ENCODE measurements at regions of chr17 and their contacts with region 1.

Region 1: GRCh38 chr17:29116804-29117772 is 63.1 kb downstream of the MYO18A start:
- DNase-seq: peak; percentile 77
- ATAC-seq: peak; percentile 70
- H3K4me3 ChIP-seq: no peak overlapping the region
- H3K4me3 Mint-ChIP-seq: no peak overlapping the region
- H3K27ac ChIP-seq: no peak overlapping the region
- H3K27ac Mint-ChIP-seq: no peak overlapping the region
- H3K4me1 ChIP-seq: no peaks in the 10 kb centered on the region
- H3K4me1 Mint-ChIP-seq: peaks cover 5% of the 10 kb centered on the region
- H3K27me3 ChIP-seq: no peaks in the 10 kb centered on the region
- H3K27me3 Mint-ChIP-seq: no peaks in the 10 kb centered on the region
- CTCF ChIP-seq: peak; percentile 95

Region 2: DNA sequence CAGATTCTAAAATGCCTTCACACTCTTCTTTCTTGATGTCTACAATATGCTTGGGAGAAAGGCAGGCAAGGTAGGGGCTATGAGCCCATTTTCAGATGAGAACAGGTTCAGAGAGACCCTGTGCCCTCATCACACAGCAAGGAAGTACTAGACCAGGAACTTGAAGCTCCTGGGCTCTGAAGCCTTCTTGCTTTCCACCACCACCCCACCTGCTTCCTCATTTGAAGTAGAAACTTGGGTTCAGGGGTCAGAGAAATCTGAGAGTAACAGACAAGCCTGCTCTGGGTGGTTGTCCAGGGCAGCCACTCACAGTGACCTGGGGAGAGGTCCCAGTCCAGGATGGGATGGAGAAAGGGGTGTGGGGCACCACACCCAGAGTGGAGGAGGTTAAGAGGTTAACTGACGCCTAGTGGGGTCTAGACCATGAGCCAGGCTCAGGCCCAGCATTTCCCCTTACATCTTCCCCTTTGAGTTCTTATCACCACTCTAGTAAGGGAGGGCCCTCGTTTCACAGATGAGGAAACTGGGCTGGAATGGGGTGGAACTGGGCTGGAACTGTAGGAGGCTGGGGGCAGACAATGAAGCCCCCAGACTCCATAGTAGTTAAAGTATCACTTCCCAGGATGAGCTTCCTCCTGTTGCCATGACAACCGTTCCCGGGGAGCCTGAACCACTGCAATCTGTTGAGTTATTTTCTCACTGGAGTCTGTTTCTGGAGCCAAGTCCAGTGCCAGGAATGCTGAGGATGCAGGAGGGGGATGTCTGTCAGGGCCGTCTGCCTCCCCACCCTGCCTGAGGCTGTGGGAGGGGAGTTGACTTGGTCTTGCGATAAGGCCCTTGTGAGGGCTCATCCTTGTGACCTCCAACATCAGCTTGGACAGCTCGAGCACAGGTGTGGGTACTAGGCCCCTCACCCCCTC is 149.6 kb before region 1 on chr17:
- CTCF ChIA-PET with region 1: interaction called, 359 read pairs
- POLR2A ChIA-PET with region 1: no interaction called
- intact Hi-C with region 1: loop called (anchors 1 kb)
- DNase-seq: peak; percentile 50
- ATAC-seq: peak; percentile 21
- H3K4me3 ChIP-seq: no peak overlapping the region
- H3K4me3 Mint-ChIP-seq: no peak overlapping the region
- H3K27ac ChIP-seq: peak overlapping the region in 1 of 2 donors; percentile 40
- H3K27ac Mint-ChIP-seq: peak overlapping the region; percentile 66
- H3K4me1 ChIP-seq: peaks cover 4 to 17% of the 10 kb centered on the region in 2 donors
- H3K4me1 Mint-ChIP-seq: peaks cover 9% of the 10 kb centered on the region
- H3K27me3 ChIP-seq: peaks cover 0 to 15% (median 2%) of the 10 kb centered on the region in 4 experiments
- H3K27me3 Mint-ChIP-seq: peaks cover 13% of the 10 kb centered on the region
- CTCF ChIP-seq: no peak

Region 3: GRCh38 chr17:29089601-29090044 is 27.5 kb before region 1 on chr17:
- CTCF ChIA-PET with region 1: interaction called, 29 read pairs
- POLR2A ChIA-PET with region 1: no interaction called
- intact Hi-C with region 1: no loop called
- DNase-seq: no peak
- ATAC-seq: no peak
- H3K4me3 ChIP-seq: no peak overlapping the region
- H3K4me3 Mint-ChIP-seq: no peak overlapping the region
- H3K27ac ChIP-seq: no peak overlapping the region
- H3K27ac Mint-ChIP-seq: no peak overlapping the region
- H3K4me1 ChIP-seq: no peaks in the 10 kb centered on the region
- H3K4me1 Mint-ChIP-seq: no peaks in the 10 kb centered on the region
- H3K27me3 ChIP-seq: no peaks in the 10 kb centered on the region
- H3K27me3 Mint-ChIP-seq: no peaks in the 10 kb centered on the region
- CTCF ChIP-seq: no peak

Region 4: DNA sequence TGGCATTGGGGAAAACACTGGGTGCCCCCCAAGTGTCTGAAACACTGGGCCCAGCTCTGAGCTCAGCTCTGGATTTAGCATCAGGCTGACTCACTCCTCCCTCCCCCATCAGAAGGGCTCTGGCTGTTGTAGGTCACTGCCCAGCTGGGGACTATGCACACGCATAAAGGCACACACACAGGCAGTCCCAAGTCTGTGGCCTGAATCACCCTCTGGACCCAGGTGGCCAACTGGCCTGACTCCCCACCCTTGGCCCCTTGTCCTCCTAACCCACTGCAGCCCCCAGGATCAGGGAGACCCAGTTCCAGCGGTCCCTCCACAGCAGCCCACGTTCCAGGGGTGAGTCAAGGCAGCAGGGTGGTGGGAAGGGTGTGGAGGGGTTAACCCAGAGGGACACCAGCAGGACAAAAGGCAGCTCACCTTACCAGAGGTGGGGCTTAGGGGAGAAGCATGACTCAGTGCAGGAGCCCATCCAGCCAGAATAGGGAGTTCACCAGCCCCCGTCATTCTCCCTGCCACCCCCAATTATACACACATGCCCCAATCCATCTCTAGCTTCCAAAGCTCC is 16.1 kb after region 1 on chr17:
- CTCF ChIA-PET with region 1: interaction called, 62 read pairs
- POLR2A ChIA-PET with region 1: no interaction called
- intact Hi-C with region 1: no loop called
- DNase-seq: no peak
- ATAC-seq: no peak
- H3K4me3 ChIP-seq: no peak overlapping the region
- H3K4me3 Mint-ChIP-seq: no peak overlapping the region
- H3K27ac ChIP-seq: no peak overlapping the region
- H3K27ac Mint-ChIP-seq: no peak overlapping the region
- H3K4me1 ChIP-seq: peaks cover 11 to 14% of the 10 kb centered on the region in 2 donors
- H3K4me1 Mint-ChIP-seq: peaks cover 35% of the 10 kb centered on the region
- H3K27me3 ChIP-seq: no peaks in the 10 kb centered on the region
- H3K27me3 Mint-ChIP-seq: no peaks in the 10 kb centered on the region
- CTCF ChIP-seq: no peak

Region 5: GRCh38 chr17:29180034-29180787 is 63.1 kb after region 1 on chr17 and contains the start of gene MYO18A:
- CTCF ChIA-PET with region 1: interaction called, 14 read pairs
- POLR2A ChIA-PET with region 1: interaction called, 6 read pairs
- intact Hi-C with region 1: loop called (anchors 2 kb)
- DNase-seq: peak; percentile 87
- ATAC-seq: peak; percentile 97
- H3K4me3 ChIP-seq: peak within 1 kb of the TSS in 3 of 5 experiments; percentile 33 to 46 (median 44)
- H3K4me3 Mint-ChIP-seq: peak within 1 kb of the TSS; percentile 69
- H3K27ac ChIP-seq: no peak within 1 kb of the TSS
- H3K27ac Mint-ChIP-seq: no peak within 1 kb of the TSS
- H3K4me1 ChIP-seq: peaks cover 9 to 28% of the 10 kb centered on the region in 2 donors
- H3K4me1 Mint-ChIP-seq: peaks cover 16% of the 10 kb centered on the region
- H3K27me3 ChIP-seq: peaks cover 0 to 2% (median 0%) of the 10 kb centered on the region in 4 experiments
- H3K27me3 Mint-ChIP-seq: peaks cover 7% of the 10 kb centered on the region
- CTCF ChIP-seq: peak; percentile 81
- total RNA-seq, gene MYO18A: 155 and 169 TPM in 2 replicates

Measured in B cell (primary cell).